Tibial artery (tissue), 4 donors: ENCODE measurements at regions of chr5 and their contacts with region 1.

Region 1: GRCh38 chr5:146049014-146049703 is 56.2 kb downstream of the PLAC8L1 start:
- DNase-seq: peak in 1 of 2 donors; percentile 45
- H3K4me3 ChIP-seq: no peak overlapping the region
- H3K27ac ChIP-seq: no peak overlapping the region
- H3K4me1 ChIP-seq: no peaks in the 10 kb centered on the region
- H3K27me3 ChIP-seq: no peaks in the 10 kb centered on the region
- CTCF ChIP-seq: peak; percentile 68

Region 2: DNA sequence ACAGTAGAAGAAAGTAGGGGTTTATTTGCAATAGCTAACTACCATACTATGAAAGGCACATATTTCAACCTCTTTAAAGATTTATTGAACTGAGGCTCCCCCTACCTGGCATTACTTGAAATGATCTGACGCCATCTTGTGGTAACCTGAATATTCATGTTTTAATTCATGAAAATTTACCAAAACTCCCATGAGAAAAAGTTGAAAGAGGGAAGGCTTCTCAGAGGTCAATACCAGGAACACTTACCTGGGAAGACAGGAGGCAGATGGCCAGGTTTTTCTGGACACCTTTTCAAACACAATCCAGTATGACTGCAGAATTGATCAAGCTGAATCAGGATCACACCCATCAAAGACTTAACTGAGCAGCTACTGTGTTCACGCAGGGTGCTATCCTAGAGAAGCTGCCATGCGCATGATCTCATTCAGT is 223.4 kb before region 1 on chr5:
- intact Hi-C with region 1: loop called (anchors 10 kb)
- DNase-seq: no peak
- H3K4me3 ChIP-seq: no peak overlapping the region
- H3K27ac ChIP-seq: no peak overlapping the region
- H3K4me1 ChIP-seq: peaks cover 0 to 16% (median 12%) of the 10 kb centered on the region in 4 donors
- H3K27me3 ChIP-seq: no peaks in the 10 kb centered on the region
- CTCF ChIP-seq: peak; percentile 70 to 73